Aorta (tissue), 5 donors: ENCODE measurements at regions of chr3 and their contacts with region 1.

Region 1: DNA sequence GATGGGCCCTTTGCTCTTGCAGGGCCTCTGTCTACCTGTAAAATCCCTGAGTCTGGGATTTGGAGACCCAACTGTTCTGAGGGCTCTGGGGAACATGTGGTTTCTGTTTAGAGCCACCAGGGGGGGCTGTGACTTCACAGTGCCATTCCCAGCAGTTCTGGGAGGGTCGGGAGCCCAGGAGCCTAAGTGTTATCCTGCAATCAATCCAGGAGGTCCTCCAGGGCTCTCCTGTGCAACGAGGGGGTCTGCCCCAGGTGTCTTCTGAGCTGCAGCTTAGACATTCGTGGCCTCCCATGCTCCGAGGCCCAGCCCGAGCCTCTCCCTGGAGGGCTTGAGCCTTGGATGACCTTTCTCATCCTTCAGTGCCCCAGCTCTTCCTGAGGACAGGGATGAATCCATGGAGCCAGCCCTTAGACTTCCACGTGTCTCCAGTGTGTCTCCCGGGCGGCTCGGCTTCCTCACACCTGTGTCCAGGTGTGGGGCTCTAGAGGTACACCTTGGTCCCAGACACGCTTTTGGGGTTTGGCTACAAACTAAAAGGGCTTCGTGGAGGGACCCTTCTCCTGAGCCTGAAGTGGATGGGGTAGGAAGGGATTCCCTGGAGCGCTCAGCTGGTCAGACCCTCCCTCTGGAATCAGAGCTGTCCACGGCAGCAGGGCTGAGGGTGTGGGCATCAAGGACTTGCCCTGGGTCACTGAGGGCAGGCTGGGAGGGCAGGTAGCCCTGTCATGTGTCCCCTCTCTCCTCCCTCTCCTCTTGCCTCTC is 20.3 kb upstream of the ABTB1 start:
- DNase-seq: peak in 1 of 2 donors; percentile 84
- ATAC-seq: peak; percentile 82
- H3K4me3 ChIP-seq: no peak overlapping the region
- H3K27ac ChIP-seq: no peak overlapping the region
- H3K4me1 ChIP-seq: no peaks in the 10 kb centered on the region
- H3K27me3 ChIP-seq: no peaks in the 10 kb centered on the region

Region 2: GRCh38 chr3:127488141-127488672 is 164.2 kb before region 1 on chr3:
- intact Hi-C with region 1: no loop called
- DNase-seq: no peak
- ATAC-seq: no peak
- H3K4me3 ChIP-seq: no peak overlapping the region
- H3K27ac ChIP-seq: no peak overlapping the region
- H3K4me1 ChIP-seq: no peaks in the 10 kb centered on the region
- H3K27me3 ChIP-seq: no peaks in the 10 kb centered on the region

Region 3: GRCh38 chr3:127690823-127691452 is 38.5 kb after region 1 on chr3:
- intact Hi-C with region 1: loop called in 1 of 2 experiments (anchors 2 kb)
- DNase-seq: peak; percentile 72 to 79
- ATAC-seq: peak; percentile 84
- H3K4me3 ChIP-seq: no peak overlapping the region
- H3K27ac ChIP-seq: peak overlapping the region; percentile 70 to 90
- H3K4me1 ChIP-seq: no peaks in the 10 kb centered on the region
- H3K27me3 ChIP-seq: no peaks in the 10 kb centered on the region

Region 4: DNA sequence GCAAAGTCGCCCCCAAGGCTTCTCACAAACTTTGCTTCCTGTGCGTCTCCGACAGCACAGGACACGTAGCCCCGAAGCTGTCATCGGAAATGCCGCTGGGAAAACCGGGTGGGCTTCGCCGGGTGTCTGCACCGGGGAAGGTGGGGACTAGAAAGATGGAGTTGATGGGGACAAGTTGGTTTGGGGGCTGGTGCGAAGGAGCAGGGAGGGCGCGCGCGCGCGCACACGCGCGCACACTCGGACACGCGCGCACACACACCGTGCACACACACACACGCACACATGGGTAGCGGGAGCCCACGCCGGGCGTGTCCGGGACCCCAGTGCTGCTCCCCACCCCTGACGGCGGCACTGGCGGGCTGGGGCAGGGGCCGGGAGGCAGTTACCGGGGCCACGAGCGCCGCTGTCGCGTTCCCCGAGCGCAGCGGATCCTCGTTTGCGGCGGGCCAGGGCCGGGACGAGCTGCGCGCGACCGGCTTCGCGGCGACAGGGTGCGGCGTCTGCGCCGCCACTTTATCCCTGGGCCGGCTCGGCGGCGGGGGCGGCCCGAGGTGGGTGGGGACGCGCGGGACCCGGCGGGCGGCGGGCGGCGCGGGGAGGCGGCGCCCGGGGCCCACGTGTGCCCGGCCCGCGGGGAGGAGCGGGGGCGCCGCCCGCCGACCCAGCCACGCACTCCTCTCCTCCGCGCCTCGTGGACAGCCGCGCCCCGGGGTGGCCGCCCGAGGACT is 170.4 kb after region 1 on chr3:
- intact Hi-C with region 1: loop called in 1 of 2 experiments (anchors 10 kb)
- DNase-seq: peak; percentile 79 to 88
- ATAC-seq: peak; percentile 89
- H3K4me3 ChIP-seq: peak overlapping the region; percentile 74 to 89
- H3K27ac ChIP-seq: peak overlapping the region; percentile 48 to 62
- H3K4me1 ChIP-seq: peaks cover 0 to 3% of the 10 kb centered on the region in 2 donors
- H3K27me3 ChIP-seq: no peaks in the 10 kb centered on the region

Region 5: DNA sequence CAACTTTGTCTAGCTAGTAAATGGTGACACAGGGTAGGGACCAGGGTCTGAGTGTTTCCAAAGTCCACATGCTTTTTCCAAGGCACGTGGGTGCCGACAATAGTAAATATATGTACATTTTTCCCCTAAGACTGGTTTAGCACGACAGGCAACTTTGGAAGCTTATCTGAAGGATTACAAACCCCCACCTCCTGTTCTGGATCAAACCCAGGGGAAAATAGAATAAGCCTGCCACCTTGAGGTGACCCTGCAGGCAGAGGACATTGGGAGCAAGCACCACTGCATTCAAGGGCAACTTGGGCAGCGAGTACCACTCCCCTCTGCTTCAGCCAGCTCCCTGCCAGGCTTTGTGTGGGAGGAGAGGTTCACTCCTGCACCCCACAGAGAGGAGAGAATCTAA is 307.4 kb after region 1 on chr3:
- intact Hi-C with region 1: loop called in 1 of 2 experiments (anchors 5 kb)
- DNase-seq: no peak
- ATAC-seq: no peak
- H3K4me3 ChIP-seq: no peak overlapping the region
- H3K27ac ChIP-seq: no peak overlapping the region
- H3K4me1 ChIP-seq: no peaks in the 10 kb centered on the region
- H3K27me3 ChIP-seq: no peaks in the 10 kb centered on the region

Region 6: DNA sequence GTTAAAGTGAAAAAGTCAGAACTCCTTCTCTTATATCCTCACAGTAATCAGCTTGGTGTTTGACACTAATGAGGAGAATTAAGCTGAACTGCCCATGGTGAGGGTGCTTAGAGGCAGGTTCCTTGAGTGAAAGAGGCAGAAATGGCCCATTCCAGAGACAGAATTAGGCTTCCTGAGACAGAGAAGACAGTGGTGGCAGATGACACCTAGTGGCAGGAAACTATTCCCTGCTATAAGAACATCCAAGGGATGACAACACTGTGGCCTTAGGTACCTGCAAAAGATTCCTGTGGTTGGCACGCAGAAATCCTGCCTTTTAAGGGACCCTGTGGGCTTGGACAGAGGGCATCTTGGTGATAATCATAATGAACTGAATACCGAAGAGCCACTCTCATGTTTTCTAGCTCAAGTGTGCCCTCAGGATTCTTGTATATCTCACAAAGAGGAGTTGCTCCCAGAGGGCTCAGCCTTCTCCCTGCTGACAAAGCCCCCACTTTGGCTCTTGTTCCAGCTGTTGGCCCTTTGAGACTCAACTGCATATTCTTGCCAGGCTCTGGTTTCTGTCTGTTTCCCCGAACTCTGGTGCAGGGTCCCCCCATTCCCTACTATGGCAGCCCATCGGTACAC is 318.7 kb after region 1 on chr3:
- intact Hi-C with region 1: loop called (anchors 1 to 5 kb)
- DNase-seq: no peak
- ATAC-seq: peak; percentile 70
- H3K4me3 ChIP-seq: no peak overlapping the region
- H3K27ac ChIP-seq: no peak overlapping the region
- H3K4me1 ChIP-seq: no peaks in the 10 kb centered on the region
- H3K27me3 ChIP-seq: no peaks in the 10 kb centered on the region